Heart left ventricle (tissue), 16 donors: ENCODE measurements at regions of chr4 and their contacts with region 1.

Region 1: GRCh38 chr4:25159884-25160713 is at the start of gene SEPSECS:
- DNase-seq: peak; percentile 98 to 99 (median 98)
- ATAC-seq: peak; percentile 91 to 96 (median 93)
- H3K4me3 ChIP-seq: peak within 1 kb of the TSS; percentile 59 to 96 (median 82)
- H3K27ac ChIP-seq: peak within 1 kb of the TSS; percentile 83 to 98 (median 92)
- H3K4me1 ChIP-seq: peaks cover 0 to 37% (median 15%) of the 10 kb centered on the region in 12 donors
- H3K27me3 ChIP-seq: no peaks in the 10 kb centered on the region
- CTCF ChIP-seq: peak in 1 of 12 donors; percentile 23
- POLR2A ChIP-seq: no peak
- total RNA-seq, gene SEPSECS: 3.2 to 7.6 (median 6.2) TPM

Region 2: GRCh38 chr4:24965627-24966026 is 194.5 kb before region 1 on chr4:
- intact Hi-C with region 1: no loop called
- DNase-seq: no peak
- ATAC-seq: no peak
- H3K4me3 ChIP-seq: no peak overlapping the region
- H3K27ac ChIP-seq: no peak overlapping the region
- H3K4me1 ChIP-seq: no peaks in the 10 kb centered on the region
- H3K27me3 ChIP-seq: no peaks in the 10 kb centered on the region
- CTCF ChIP-seq: no peak
- POLR2A ChIP-seq: no peak

Region 3: DNA sequence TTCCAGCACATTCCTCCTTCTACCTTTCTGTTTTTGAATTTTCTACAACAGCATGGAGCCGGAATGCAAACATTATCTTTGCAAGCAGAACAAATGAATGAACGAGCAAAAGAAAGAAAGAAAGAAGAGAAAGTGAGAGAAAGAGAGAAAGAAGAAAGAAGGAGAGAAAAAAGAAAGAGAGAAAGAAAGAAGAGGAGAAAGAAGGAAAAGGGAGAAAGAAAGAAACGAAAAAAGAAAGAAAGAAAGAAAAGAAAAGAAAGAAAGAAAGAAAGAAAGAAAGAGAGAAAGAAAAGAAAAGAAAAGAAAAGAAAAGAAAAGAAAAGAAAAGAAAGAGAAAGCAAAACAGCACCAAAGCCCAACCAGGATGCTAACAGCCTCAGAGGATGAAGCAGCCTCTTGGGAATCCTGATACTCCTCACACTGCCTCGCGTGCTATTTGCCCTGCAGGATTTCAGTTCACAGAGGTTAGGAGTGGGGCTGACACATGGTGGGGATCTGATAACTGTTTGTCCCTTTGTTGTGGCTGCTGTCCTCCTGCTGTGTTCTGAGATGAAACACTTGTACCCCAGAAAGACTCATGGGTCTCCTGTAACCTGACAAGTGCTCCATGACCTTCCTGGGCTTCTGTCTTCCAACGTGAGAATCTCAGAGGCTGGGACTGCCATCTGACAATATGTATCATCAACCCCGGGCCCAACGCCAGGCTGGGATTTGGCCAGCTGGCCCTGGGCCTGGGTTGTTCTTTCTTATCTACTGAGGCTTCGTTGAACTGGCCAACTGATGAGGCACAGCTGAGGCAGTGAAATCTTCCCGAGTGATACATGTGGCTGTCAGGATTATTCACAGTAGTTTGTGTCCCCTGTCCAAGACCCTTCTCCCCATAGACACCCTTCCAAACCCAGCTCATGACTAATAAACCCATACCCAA is 60.9 kb before region 1 on chr4:
- intact Hi-C with region 1: no loop called
- DNase-seq: peak; percentile 78 to 89 (median 87)
- ATAC-seq: peak; percentile 79 to 92 (median 90)
- H3K4me3 ChIP-seq: no peak overlapping the region
- H3K27ac ChIP-seq: peak overlapping the region; percentile 40 to 87 (median 79)
- H3K4me1 ChIP-seq: peaks cover 0 to 37% (median 26%) of the 10 kb centered on the region in 12 donors
- H3K27me3 ChIP-seq: no peaks in the 10 kb centered on the region
- CTCF ChIP-seq: no peak
- POLR2A ChIP-seq: no peak

Region 4: DNA sequence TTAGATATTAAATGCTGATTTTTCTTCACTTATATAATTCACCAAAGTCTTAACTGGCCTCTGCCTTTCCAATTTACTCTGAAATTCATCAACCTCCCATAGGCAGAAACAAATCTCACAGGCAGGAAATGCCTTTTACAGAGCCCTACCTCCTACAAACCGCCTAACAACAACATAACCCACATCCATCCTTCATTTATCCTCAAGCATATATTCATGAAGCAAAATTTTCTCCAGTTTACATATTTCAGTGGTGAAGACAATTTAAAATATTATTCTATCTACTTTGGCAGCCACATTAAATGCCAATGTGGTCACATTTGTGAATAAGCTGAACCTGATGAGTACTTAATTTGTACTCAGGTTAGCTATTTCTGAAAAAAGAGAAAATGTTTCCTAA is 30.2 kb before region 1 on chr4:
- intact Hi-C with region 1: loop called in 1 of 10 experiments (anchors 1 kb)
- DNase-seq: no peak
- ATAC-seq: no peak
- H3K4me3 ChIP-seq: no peak overlapping the region
- H3K27ac ChIP-seq: no peak overlapping the region
- H3K4me1 ChIP-seq: peaks cover 0 to 11% (median 3%) of the 10 kb centered on the region in 12 donors
- H3K27me3 ChIP-seq: no peaks in the 10 kb centered on the region
- CTCF ChIP-seq: no peak
- POLR2A ChIP-seq: no peak

Region 5: GRCh38 chr4:25367004-25367621 is 207.0 kb after region 1 on chr4:
- intact Hi-C with region 1: loop called in 1 of 10 experiments (anchors 10 kb)
- DNase-seq: no peak
- ATAC-seq: no peak
- H3K4me3 ChIP-seq: no peak overlapping the region
- H3K27ac ChIP-seq: no peak overlapping the region
- H3K4me1 ChIP-seq: no peaks in the 10 kb centered on the region
- H3K27me3 ChIP-seq: no peaks in the 10 kb centered on the region
- CTCF ChIP-seq: peak; percentile 30 to 73 (median 60)
- POLR2A ChIP-seq: no peak

Region 6: GRCh38 chr4:25376754-25377571 is 216.9 kb after region 1 on chr4 and contains the start of gene ANAPC4:
- intact Hi-C with region 1: loop called in 1 of 10 experiments (anchors 5 kb)
- DNase-seq: peak; percentile 95 to 98 (median 97)
- ATAC-seq: peak; percentile 95 to 98 (median 98)
- H3K4me3 ChIP-seq: peak within 1 kb of the TSS; percentile 50 to 97 (median 94)
- H3K27ac ChIP-seq: peak within 1 kb of the TSS in 11 of 12 donors; percentile 54 to 86 (median 75)
- H3K4me1 ChIP-seq: peaks cover 0 to 32% (median 10%) of the 10 kb centered on the region in 12 donors
- H3K27me3 ChIP-seq: no peaks in the 10 kb centered on the region
- CTCF ChIP-seq: peak in 5 of 12 donors; percentile 10 to 24 (median 18)
- POLR2A ChIP-seq: peak in 1 of 2 donors; percentile 65
- total RNA-seq, gene ANAPC4: 6.7 to 15.5 (median 12.5) TPM